HepG2 (cell line): ENCODE measurements at regions of chr11 and their contacts with region 1.

Region 1: DNA sequence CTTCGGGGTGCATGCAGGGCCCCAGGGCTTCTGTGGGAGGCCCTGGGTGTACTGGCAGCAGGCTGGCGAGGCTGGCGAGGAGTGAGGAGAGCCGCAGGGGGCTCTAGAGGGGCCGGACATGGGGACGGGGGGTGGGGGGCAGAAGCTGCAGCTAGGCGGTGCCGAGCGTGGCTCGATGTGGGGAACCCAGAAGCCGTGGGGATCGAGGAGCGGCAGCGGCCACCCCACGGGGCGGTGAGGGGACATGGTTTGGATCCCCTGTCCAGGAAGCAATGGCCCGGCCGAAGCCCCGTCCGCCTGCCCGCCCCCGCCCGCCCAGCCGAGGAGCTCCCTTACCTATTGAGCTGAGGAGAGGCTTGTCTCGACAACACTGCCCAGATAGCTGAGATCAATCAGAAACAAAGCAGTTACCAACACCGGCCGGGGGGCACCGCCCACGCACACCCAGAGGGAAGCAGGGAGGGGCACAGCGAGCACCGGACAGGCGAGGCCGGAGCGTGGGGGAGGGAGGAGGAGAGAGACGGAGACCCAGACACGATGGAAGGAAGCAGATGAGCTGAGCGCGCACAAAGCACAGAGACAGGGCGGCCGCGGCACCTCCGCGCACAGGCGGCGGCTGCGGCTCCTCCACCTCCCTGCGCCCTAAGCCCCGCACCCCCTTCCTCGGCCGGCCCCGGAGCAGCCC is 38.7 kb downstream of the IGSF9B start:
- DNase-seq: no peak
- ATAC-seq: no peak
- H3K4me3 ChIP-seq: no peak overlapping the region
- H3K27ac ChIP-seq: no peak overlapping the region
- H3K4me1 ChIP-seq: no peaks in the 10 kb centered on the region
- H3K27me3 ChIP-seq: peaks cover 3 to 43% of the 10 kb centered on the region in 2 experiments; a peak in 4 of 5 replicates
- CTCF ChIP-seq: no peak
- EP300 ChIP-seq: no peak
- POLR2A ChIP-seq: no peak
- RAD21 ChIP-seq: no peak

Region 2: DNA sequence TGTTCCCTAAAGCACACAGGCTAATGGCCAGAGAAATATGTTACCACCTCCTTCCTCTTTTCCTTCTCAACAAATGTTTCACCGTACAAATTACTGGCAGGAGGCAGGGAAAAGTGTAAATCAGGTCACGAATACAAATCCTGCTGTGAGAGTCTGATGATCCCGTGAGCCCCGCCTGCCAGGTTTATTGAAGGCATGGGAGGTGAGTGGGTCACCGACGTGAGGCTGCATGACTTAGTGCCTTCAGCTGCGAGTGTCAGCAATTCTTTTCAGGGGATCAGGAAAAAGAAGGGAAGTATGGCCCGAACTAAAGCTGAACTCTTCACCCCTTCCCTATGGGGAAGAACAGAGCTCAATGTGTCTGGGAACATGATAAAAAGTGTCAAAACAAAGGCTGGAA is 552.0 kb before region 1 on chr11:
- CTCF ChIA-PET with region 1: no interaction called
- POLR2A ChIA-PET with region 1: no interaction called
- in situ Hi-C with region 1: no loop called
- intact Hi-C with region 1: no loop called
- DNase-seq: no peak
- ATAC-seq: no peak
- H3K4me3 ChIP-seq: no peak overlapping the region
- H3K27ac ChIP-seq: no peak overlapping the region
- H3K4me1 ChIP-seq: no peaks in the 10 kb centered on the region
- H3K27me3 ChIP-seq: 0 out of 5 replicates have a peak, but pooled peaks cover 0 to 8% of the 10 kb centered on the region in 2 experiments
- CTCF ChIP-seq: no peak
- EP300 ChIP-seq: no peak
- POLR2A ChIP-seq: no peak
- RAD21 ChIP-seq: no peak

Region 3: GRCh38 chr11:133842053-133842452 is 76.0 kb before region 1 on chr11:
- CTCF ChIA-PET with region 1: no interaction called
- POLR2A ChIA-PET with region 1: no interaction called
- in situ Hi-C with region 1: no loop called
- intact Hi-C with region 1: loop called (anchors 2 kb)
- DNase-seq: no peak
- ATAC-seq: no peak
- H3K4me3 ChIP-seq: no peak overlapping the region
- H3K27ac ChIP-seq: no peak overlapping the region
- H3K4me1 ChIP-seq: no peaks in the 10 kb centered on the region
- H3K27me3 ChIP-seq: peaks cover 0 to 15% of the 10 kb centered on the region in 2 experiments; a peak in 2 of 5 replicates
- CTCF ChIP-seq: no peak
- EP300 ChIP-seq: no peak
- POLR2A ChIP-seq: no peak
- RAD21 ChIP-seq: no peak